ENCODE measurements at regions of chr14 and their contacts with region 1.

Region 1: GRCh38 chr14:66359500-66359899 is 126.7 kb upstream of the CCDC196 start:
- DNase-seq: peak; percentile 46
- ATAC-seq: no peak
- H3K4me3 Mint-ChIP-seq: no peak overlapping the region
- H3K27ac Mint-ChIP-seq: no peak overlapping the region
- H3K4me1 Mint-ChIP-seq: no peaks in the 10 kb centered on the region
- H3K27me3 Mint-ChIP-seq: peaks cover 4% of the 10 kb centered on the region

Region 2: DNA sequence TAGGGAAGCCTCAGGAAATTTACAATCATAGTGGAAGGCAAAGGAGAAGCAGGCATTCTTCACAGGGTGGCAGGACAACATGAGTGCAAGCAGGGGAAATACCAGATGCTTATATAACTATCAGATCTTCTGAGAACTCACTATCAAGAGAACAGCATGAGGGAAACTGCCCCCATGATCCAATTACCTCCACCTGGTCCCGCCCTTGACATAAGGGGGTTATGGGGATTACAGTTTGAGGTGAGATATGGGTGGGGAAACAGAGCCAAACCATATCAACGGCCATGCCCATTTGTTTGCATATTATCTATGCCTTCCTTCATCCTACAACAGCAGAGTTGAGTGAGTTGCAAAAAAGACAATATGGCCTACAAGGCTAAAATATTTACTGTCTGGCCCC is 13.5 kb before region 1 on chr14:
- CTCF ChIA-PET with region 1: interaction called, 13 read pairs
- POLR2A ChIA-PET with region 1: no interaction called
- DNase-seq: no peak
- ATAC-seq: no peak
- H3K4me3 Mint-ChIP-seq: no peak overlapping the region
- H3K27ac Mint-ChIP-seq: no peak overlapping the region
- H3K4me1 Mint-ChIP-seq: no peaks in the 10 kb centered on the region
- H3K27me3 Mint-ChIP-seq: peaks cover 2% of the 10 kb centered on the region

Region 3: GRCh38 chr14:66395300-66395699 is 35.8 kb after region 1 on chr14:
- CTCF ChIA-PET with region 1: interaction called, 99 read pairs
- POLR2A ChIA-PET with region 1: interaction called, 4 read pairs
- DNase-seq: peak; percentile 65
- ATAC-seq: peak; percentile 89
- H3K4me3 Mint-ChIP-seq: no peak overlapping the region
- H3K27ac Mint-ChIP-seq: no peak overlapping the region
- H3K4me1 Mint-ChIP-seq: peaks cover 10% of the 10 kb centered on the region
- H3K27me3 Mint-ChIP-seq: peaks cover 12% of the 10 kb centered on the region

Region 4: DNA sequence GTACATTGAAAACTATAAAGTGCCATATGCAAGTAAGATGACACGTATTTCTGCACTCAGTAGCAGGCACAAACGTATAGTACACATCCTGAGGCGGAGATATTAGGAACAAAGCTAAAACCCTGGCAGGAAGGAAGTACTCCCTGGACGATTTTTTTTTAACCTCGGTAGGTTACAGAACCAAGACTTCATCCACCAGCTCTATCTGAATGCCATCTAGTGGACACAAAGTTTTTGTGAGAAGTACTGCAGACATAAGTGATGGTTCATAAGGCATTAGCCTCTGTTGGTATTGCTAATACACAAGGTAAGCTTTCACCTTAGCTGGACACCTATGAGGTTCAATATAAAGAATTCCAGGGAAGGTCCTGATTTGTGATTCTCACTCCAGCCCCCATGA is 43.7 kb after region 1 on chr14:
- CTCF ChIA-PET with region 1: interaction called, 95 read pairs
- POLR2A ChIA-PET with region 1: interaction called, 4 read pairs
- DNase-seq: no peak
- ATAC-seq: peak; percentile 57
- H3K4me3 Mint-ChIP-seq: no peak overlapping the region
- H3K27ac Mint-ChIP-seq: no peak overlapping the region
- H3K4me1 Mint-ChIP-seq: no peaks in the 10 kb centered on the region
- H3K27me3 Mint-ChIP-seq: peaks cover 2% of the 10 kb centered on the region